ENCODE measurements at regions of chr17 and their contacts with region 1.

Region 1: GRCh38 chr17:74203439-74204240 is at the start of gene RPL38:
- DNase-seq: peak; percentile 94
- CTCF ChIP-seq: peak; percentile 99

Region 2: DNA sequence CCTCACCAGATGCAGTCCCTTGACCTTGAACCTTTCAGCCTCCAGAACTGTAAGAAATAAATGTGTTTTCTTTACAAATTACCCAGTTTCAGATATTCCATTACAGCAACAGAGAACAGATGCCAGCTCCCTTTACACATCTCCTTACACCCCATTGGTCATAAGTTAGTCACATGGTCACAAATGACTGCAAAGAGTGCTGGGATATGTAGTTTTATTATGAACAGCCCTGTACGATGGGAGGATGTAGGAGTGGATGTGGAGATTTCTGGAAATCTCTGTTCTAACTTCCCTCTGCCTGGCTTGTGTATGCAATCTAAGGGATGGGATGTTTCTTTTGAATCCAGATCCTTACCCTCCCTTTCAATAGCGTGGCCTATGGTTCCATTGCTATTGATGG is 13.5 kb before region 1 on chr17:
- CTCF ChIA-PET with region 1: interaction called, 27 read pairs
- POLR2A ChIA-PET with region 1: no interaction called
- DNase-seq: no peak
- CTCF ChIP-seq: no peak